Naive thymus-derived CD4-positive, alpha-beta T cell (primary cell): ENCODE measurements at regions of chr2 and their contacts with region 1.

Region 1: DNA sequence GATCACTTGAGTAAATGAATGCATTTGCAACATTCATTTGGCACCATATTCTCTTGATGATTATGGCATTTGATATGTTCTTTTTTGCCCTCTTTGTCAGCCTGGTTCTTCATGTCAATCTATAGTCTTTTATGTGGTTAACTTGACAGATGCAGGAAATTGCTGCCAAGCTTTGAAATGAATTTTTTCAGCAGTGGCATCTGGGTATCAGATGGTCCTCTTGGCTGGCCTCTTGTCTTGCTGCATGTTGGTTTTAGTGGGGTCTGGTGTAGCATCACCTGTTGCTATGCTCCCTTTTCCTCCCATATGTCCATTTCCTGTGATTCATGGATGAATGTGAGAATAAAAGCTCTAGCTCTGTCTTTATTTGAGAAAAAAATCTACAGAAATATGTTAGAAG is 119.9 kb downstream of the DPP4 start:
- DNase-seq: peak in 7 of 9 donors; percentile 48 to 79 (median 73)
- ATAC-seq: peak; percentile 77
- H3K4me3 ChIP-seq: peak overlapping the region; percentile 12
- H3K4me3 Mint-ChIP-seq: peak overlapping the region in 9 of 10 donors; percentile 42 to 77 (median 60)
- H3K27ac ChIP-seq: no peak overlapping the region
- H3K27ac Mint-ChIP-seq: peak overlapping the region; percentile 19 to 88 (median 78)
- H3K4me1 ChIP-seq: peaks cover 47 to 63% of the 10 kb centered on the region in 2 donors
- H3K4me1 Mint-ChIP-seq: peaks cover 33 to 65% (median 51%) of the 10 kb centered on the region in 7 donors
- H3K27me3 ChIP-seq: no peaks in the 10 kb centered on the region
- H3K27me3 Mint-ChIP-seq: no peaks in the 10 kb centered on the region

Region 2: GRCh38 chr2:160482673-160483072 is 1471.4 kb before region 1 on chr2:
- CTCF ChIA-PET with region 1: no interaction called
- POLR2A ChIA-PET with region 1: no interaction called
- intact Hi-C with region 1: loop called in 1 of 2 experiments (anchors 10 kb)
- DNase-seq: peak in 7 of 9 donors; percentile 58 to 87 (median 78)
- ATAC-seq: peak; percentile 97
- H3K4me3 ChIP-seq: no peak overlapping the region
- H3K4me3 Mint-ChIP-seq: peak overlapping the region; percentile 45 to 81 (median 72)
- H3K27ac ChIP-seq: peak overlapping the region; percentile 70
- H3K27ac Mint-ChIP-seq: peak overlapping the region; percentile 73 to 97 (median 95)
- H3K4me1 ChIP-seq: peaks cover 18 to 66% of the 10 kb centered on the region in 2 donors
- H3K4me1 Mint-ChIP-seq: peaks cover 33 to 100% (median 85%) of the 10 kb centered on the region in 7 donors
- H3K27me3 ChIP-seq: no peaks in the 10 kb centered on the region
- H3K27me3 Mint-ChIP-seq: no peaks in the 10 kb centered on the region

Region 3: GRCh38 chr2:161238560-161239325 is 715.4 kb before region 1 on chr2:
- CTCF ChIA-PET with region 1: interaction called, 4 read pairs
- POLR2A ChIA-PET with region 1: no interaction called
- intact Hi-C with region 1: loop called (anchors 5 kb)
- DNase-seq: peak; percentile 35 to 70 (median 61)
- ATAC-seq: peak; percentile 80
- H3K4me3 ChIP-seq: peak overlapping the region; percentile 76
- H3K4me3 Mint-ChIP-seq: peak overlapping the region; percentile 83 to 98 (median 95)
- H3K27ac ChIP-seq: peak overlapping the region; percentile 27
- H3K27ac Mint-ChIP-seq: peak overlapping the region; percentile 57 to 90 (median 84)
- H3K4me1 ChIP-seq: peaks cover 17 to 26% of the 10 kb centered on the region in 2 donors
- H3K4me1 Mint-ChIP-seq: peaks cover 14 to 50% (median 43%) of the 10 kb centered on the region in 7 donors
- H3K27me3 ChIP-seq: no peaks in the 10 kb centered on the region
- H3K27me3 Mint-ChIP-seq: no peaks in the 10 kb centered on the region

Region 4: DNA sequence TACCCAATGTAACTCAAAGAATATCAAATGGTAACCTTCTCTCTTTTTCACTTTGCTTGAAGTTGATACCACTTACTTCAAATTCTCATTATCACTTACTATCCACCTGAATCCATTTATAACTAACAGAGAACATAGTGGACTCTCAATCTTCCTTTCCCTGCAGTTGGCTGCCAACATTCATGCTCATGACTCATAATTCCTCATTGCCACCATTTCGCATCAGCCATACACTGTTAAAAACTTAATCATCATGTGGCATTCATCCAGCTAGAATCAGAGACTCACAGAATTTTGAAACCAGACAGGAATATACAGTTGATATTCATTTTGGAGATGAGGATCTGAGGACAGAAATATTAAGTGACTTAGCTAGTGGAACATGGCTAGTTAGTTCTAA is 273.1 kb before region 1 on chr2:
- CTCF ChIA-PET with region 1: no interaction called
- POLR2A ChIA-PET with region 1: no interaction called
- intact Hi-C with region 1: no loop called
- DNase-seq: no peak
- ATAC-seq: no peak
- H3K4me3 ChIP-seq: no peak overlapping the region
- H3K4me3 Mint-ChIP-seq: no peak overlapping the region
- H3K27ac ChIP-seq: no peak overlapping the region
- H3K27ac Mint-ChIP-seq: no peak overlapping the region
- H3K4me1 ChIP-seq: no peaks in the 10 kb centered on the region
- H3K4me1 Mint-ChIP-seq: peaks cover 0 to 3% (median 0%) of the 10 kb centered on the region in 7 donors
- H3K27me3 ChIP-seq: no peaks in the 10 kb centered on the region
- H3K27me3 Mint-ChIP-seq: peaks cover 10 to 25% (median 12%) of the 10 kb centered on the region in 5 donors

Region 5: GRCh38 chr2:161913865-161914264 is 40.2 kb before region 1 on chr2:
- CTCF ChIA-PET with region 1: no interaction called
- POLR2A ChIA-PET with region 1: no interaction called
- intact Hi-C with region 1: no loop called
- DNase-seq: no peak
- ATAC-seq: no peak
- H3K4me3 ChIP-seq: no peak overlapping the region
- H3K4me3 Mint-ChIP-seq: no peak overlapping the region
- H3K27ac ChIP-seq: no peak overlapping the region
- H3K27ac Mint-ChIP-seq: no peak overlapping the region
- H3K4me1 ChIP-seq: no peaks in the 10 kb centered on the region
- H3K4me1 Mint-ChIP-seq: peaks cover 0 to 3% (median 0%) of the 10 kb centered on the region in 7 donors
- H3K27me3 ChIP-seq: no peaks in the 10 kb centered on the region
- H3K27me3 Mint-ChIP-seq: peaks cover 0 to 18% (median 0%) of the 10 kb centered on the region in 5 donors

Region 6: DNA sequence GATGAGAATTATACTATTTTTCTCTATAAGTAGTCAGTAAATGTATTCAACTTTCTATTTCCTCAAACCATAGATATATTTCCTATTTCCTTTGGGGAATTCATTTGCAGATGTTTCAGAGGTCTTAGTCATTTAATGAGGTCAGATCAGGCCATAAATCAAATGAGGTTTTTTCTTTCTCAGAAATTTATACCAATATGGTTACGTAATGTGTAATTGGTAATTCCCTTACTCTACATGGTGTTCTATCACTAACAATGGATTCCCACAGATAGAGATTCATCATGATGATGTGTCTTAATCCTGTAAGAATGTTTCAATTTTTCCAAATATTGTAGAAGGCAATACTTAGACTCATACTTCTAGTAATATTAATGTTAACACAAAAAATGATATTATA is 11.9 kb after region 1 on chr2:
- CTCF ChIA-PET with region 1: no interaction called
- POLR2A ChIA-PET with region 1: interaction called, 3 read pairs
- intact Hi-C with region 1: loop called in 1 of 2 experiments (anchors 1 kb)
- DNase-seq: no peak
- ATAC-seq: no peak
- H3K4me3 ChIP-seq: no peak overlapping the region
- H3K4me3 Mint-ChIP-seq: no peak overlapping the region
- H3K27ac ChIP-seq: no peak overlapping the region
- H3K27ac Mint-ChIP-seq: no peak overlapping the region
- H3K4me1 ChIP-seq: no peaks in the 10 kb centered on the region
- H3K4me1 Mint-ChIP-seq: peaks cover 0 to 36% (median 0%) of the 10 kb centered on the region in 7 donors
- H3K27me3 ChIP-seq: no peaks in the 10 kb centered on the region
- H3K27me3 Mint-ChIP-seq: no peaks in the 10 kb centered on the region

Region 7: DNA sequence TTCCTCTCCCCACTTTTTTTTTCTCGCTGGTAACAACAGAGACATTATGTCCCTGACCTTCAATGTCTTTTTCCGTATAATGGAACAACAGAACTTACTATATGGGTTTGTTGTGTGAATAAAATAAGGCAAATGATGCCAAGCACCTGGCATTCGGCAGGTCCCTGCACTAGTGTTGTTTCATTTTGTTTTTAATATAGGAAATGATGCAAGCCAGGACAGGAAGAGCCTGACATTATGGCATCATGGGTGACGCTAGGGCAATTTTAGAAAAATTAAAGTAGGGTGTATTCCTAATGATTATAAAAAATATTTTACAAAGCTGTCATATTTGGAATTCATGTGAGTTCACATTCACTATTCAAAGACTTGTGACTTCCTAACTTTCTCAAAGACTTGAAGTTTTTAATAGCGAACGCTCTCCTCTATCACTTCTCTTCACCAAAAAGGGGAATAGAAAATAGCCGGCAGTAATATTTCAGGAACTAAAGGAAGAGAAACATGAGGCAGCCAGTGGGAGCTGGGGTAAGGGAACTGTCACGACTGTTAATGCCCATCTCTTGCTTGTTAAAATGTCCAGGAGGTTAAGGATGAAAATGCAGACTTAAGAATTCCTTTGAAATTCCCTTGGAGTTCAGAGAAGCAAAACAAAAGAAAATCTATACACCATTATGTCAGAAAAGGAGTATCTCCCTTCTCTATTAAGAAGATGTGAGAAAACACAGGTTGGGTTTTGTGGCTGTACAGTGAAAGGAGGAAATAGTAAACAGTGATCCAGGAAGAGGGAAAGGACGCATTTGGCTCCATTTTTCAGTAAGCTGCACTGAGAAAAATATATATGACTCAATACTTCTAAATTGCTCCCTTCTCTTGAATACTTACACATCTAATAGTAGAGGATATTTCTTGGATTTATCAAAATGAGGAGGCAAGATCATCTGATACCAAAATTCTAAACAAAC is 59.7 kb after region 1 on chr2:
- CTCF ChIA-PET with region 1: interaction called, 3 read pairs
- POLR2A ChIA-PET with region 1: interaction called, 3 read pairs
- intact Hi-C with region 1: loop called (anchors 1 kb)
- DNase-seq: peak in 7 of 9 donors; percentile 30 to 71 (median 55)
- ATAC-seq: peak; percentile 36
- H3K4me3 ChIP-seq: peak overlapping the region; percentile 11
- H3K4me3 Mint-ChIP-seq: peak overlapping the region; percentile 52 to 86 (median 70)
- H3K27ac ChIP-seq: peak overlapping the region; percentile 95
- H3K27ac Mint-ChIP-seq: peak overlapping the region; percentile 94 to 99 (median 98)
- H3K4me1 ChIP-seq: peaks cover 47 to 72% of the 10 kb centered on the region in 2 donors
- H3K4me1 Mint-ChIP-seq: peaks cover 41 to 86% (median 81%) of the 10 kb centered on the region in 7 donors
- H3K27me3 ChIP-seq: no peaks in the 10 kb centered on the region
- H3K27me3 Mint-ChIP-seq: no peaks in the 10 kb centered on the region

Region 8: DNA sequence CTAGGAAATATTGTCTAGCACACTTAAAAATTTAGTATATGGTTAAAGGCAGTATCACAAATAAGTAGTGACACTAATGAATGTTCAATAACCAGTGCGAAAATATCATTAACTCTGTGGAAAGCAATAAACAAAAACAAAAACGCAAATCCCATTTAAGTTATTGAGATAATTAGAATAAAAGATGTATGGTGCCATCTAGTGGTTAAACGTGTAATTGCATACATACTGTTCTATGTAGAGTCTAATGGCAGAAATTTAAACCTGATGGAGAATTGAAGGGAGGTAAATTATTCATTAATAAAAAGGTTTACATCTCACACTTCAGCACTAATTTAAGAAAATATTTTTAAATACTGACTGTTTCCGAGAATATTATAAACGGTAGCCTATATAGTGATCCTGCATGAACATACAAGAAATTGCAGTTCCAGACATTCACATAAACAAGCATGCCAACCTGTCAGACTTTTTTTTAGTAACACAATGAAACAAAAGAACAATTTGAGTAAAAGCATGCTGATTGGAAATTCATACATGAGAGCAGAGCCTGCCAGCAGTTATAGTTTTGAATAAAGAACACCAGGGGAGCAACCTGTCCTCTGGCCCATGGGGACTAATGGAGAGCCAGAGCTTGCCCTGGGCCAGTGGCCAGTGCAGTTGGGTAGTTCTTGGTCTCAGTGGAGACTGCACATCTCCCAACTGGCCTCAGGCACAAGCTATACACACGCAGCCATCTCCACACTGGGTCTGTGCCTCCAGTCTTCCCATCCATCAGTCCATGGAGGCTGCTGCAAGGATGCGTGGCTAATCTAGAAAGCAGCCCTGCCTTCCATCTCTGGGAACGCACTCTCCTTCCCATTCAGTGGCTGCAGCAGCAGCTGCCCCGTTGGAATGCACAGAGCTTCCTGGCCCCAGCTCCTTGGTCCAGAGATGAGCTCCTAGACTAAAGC is 170.0 kb after region 1 on chr2:
- CTCF ChIA-PET with region 1: interaction called, 3 read pairs
- POLR2A ChIA-PET with region 1: no interaction called
- intact Hi-C with region 1: loop called in 1 of 2 experiments (anchors 1 kb)
- DNase-seq: peak in 7 of 9 donors; percentile 26 to 69 (median 61)
- ATAC-seq: peak; percentile 85
- H3K4me3 ChIP-seq: no peak overlapping the region
- H3K4me3 Mint-ChIP-seq: no peak overlapping the region
- H3K27ac ChIP-seq: no peak overlapping the region
- H3K27ac Mint-ChIP-seq: no peak overlapping the region
- H3K4me1 ChIP-seq: no peaks in the 10 kb centered on the region
- H3K4me1 Mint-ChIP-seq: peaks cover 0 to 24% (median 6%) of the 10 kb centered on the region in 7 donors
- H3K27me3 ChIP-seq: no peaks in the 10 kb centered on the region
- H3K27me3 Mint-ChIP-seq: peaks cover 0 to 7% (median 0%) of the 10 kb centered on the region in 5 donors

Region 9: DNA sequence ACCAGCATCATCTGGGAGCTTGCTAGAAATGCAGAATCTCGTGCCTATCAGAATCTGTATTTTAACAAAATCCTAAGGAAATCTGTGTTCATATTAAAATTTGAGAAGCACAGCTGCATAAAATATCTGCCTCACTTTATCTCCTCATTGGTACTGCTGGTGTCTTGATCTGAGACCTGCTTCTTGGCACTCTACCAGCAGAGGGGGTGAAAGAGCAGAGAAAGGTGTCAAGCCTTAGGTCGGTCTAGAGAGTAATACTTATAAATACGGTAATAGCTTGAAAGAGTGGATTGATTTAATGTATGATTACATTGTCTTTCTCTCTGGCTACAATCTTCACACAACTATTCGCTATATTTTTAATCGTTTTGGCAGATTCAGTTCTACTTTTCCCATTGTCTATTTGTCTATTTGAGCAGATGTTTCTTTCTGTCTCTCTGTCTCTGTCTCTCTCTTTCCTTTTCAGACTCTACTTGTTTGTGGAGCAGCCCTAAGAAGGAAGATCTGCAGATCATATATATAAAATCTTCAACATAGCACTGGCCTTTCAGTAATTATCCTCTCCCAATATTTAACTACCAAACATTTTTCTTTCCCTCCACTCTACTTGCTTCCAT is 199.6 kb after region 1 on chr2:
- CTCF ChIA-PET with region 1: no interaction called
- POLR2A ChIA-PET with region 1: no interaction called
- intact Hi-C with region 1: no loop called
- DNase-seq: peak in 8 of 9 donors; percentile 11 to 57 (median 46)
- ATAC-seq: peak; percentile 90
- H3K4me3 ChIP-seq: no peak overlapping the region
- H3K4me3 Mint-ChIP-seq: peak overlapping the region in 8 of 10 donors; percentile 3 to 71 (median 41)
- H3K27ac ChIP-seq: no peak overlapping the region
- H3K27ac Mint-ChIP-seq: no peak overlapping the region
- H3K4me1 ChIP-seq: no peaks in the 10 kb centered on the region
- H3K4me1 Mint-ChIP-seq: peaks cover 0 to 7% (median 5%) of the 10 kb centered on the region in 7 donors
- H3K27me3 ChIP-seq: no peaks in the 10 kb centered on the region
- H3K27me3 Mint-ChIP-seq: peaks cover 24 to 60% (median 42%) of the 10 kb centered on the region in 5 donors

Region 10: GRCh38 chr2:163878531-163879117 is 1924.5 kb after region 1 on chr2:
- CTCF ChIA-PET with region 1: no interaction called
- POLR2A ChIA-PET with region 1: no interaction called
- intact Hi-C with region 1: no loop called
- DNase-seq: no peak
- ATAC-seq: no peak
- H3K4me3 ChIP-seq: no peak overlapping the region
- H3K4me3 Mint-ChIP-seq: no peak overlapping the region
- H3K27ac ChIP-seq: no peak overlapping the region
- H3K27ac Mint-ChIP-seq: no peak overlapping the region
- H3K4me1 ChIP-seq: no peaks in the 10 kb centered on the region
- H3K4me1 Mint-ChIP-seq: no peaks in the 10 kb centered on the region
- H3K27me3 ChIP-seq: no peaks in the 10 kb centered on the region
- H3K27me3 Mint-ChIP-seq: no peaks in the 10 kb centered on the region